Gastrocnemius medialis (tissue), 4 donors: ENCODE measurements at regions of chr16 and their contacts with region 1.

Region 1: GRCh38 chr16:4982056-4982867 is 24.1 kb downstream of the SEC14L5 start:
- DNase-seq: peak; percentile 76 to 91
- ATAC-seq: peak; percentile 86 to 91
- H3K4me3 ChIP-seq: peak overlapping the region; percentile 31 to 51 (median 45)
- H3K27ac ChIP-seq: peak overlapping the region; percentile 90 to 96 (median 92)
- H3K4me1 ChIP-seq: peaks cover 23 to 34% of the 10 kb centered on the region in 2 donors
- H3K27me3 ChIP-seq: peaks cover 0 to 4% (median 0%) of the 10 kb centered on the region in 3 donors
- CTCF ChIP-seq: no peak
- POLR2A ChIP-seq: peak; percentile 14 to 26

Region 2: GRCh38 chr16:4936991-4937781 is 45.1 kb before region 1 on chr16 and contains the start of gene PPL:
- in situ Hi-C with region 1: no loop called
- intact Hi-C with region 1: loop called (anchors 2 kb)
- DNase-seq: peak; percentile 32 to 67
- ATAC-seq: peak in 1 of 2 donors; percentile 26
- H3K4me3 ChIP-seq: peak within 1 kb of the TSS; percentile 54 to 71 (median 61)
- H3K27ac ChIP-seq: peak within 1 kb of the TSS; percentile 34 to 75 (median 71)
- H3K4me1 ChIP-seq: peaks cover 16 to 21% of the 10 kb centered on the region in 2 donors
- H3K27me3 ChIP-seq: peaks cover 0 to 10% (median 7%) of the 10 kb centered on the region in 3 donors
- CTCF ChIP-seq: no peak
- POLR2A ChIP-seq: peak in 1 of 2 donors; percentile 24
- total RNA-seq, gene PPL: 12.8 to 23.1 (median 18.3) TPM

Region 3: DNA sequence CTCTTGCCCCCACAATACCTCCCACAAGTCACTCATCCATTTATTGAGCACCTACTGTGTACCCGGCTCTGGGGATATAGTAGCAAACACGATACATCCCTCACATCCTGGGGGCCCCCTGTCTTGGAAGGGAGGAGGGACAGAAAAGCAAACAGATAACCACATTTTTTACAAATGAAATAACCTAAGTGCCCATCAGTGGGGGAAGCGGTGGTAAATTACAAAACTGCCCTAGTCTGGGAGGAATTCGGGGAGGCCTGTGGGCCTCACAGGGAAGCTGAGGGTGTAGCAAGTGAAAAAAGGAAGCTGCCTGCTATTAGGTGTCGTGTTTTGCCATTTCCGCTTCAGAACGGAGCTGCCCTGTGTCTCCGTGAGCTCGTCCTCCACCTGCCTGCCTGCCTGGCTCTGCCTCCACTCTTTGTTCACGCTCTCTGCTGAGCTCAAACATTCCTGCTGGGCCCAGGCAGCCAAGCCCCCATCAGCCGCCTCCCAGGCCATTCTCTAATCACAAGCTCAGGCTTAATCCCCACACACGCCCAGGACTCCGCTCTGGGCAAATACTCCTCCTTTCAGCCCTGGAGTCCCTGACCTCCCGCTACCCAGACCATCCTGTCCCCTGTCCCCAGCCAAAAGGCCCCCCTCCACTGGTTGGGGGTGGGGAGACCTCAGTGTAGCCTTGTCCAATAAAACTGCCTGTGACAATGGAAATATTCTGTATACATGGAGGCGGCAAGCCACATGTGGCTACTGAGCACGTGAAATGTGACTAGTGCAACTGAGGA is 34.3 kb before region 1 on chr16:
- in situ Hi-C with region 1: no loop called
- intact Hi-C with region 1: no loop called
- DNase-seq: no peak
- ATAC-seq: no peak
- H3K4me3 ChIP-seq: no peak overlapping the region
- H3K27ac ChIP-seq: no peak overlapping the region
- H3K4me1 ChIP-seq: peaks cover 6 to 13% of the 10 kb centered on the region in 2 donors
- H3K27me3 ChIP-seq: peaks cover 0 to 8% (median 5%) of the 10 kb centered on the region in 3 donors
- CTCF ChIP-seq: no peak
- POLR2A ChIP-seq: no peak